WTC11 (cell line): ENCODE measurements at regions of chr10 and their contacts with region 1.

Region 1: GRCh38 chr10:86139066-86139657 is 227.4 kb downstream of the GRID1 start:
- DNase-seq: peak; percentile 72
- ATAC-seq: peak; percentile 86
- H3K4me3 Mint-ChIP-seq: no peak overlapping the region
- H3K27ac Mint-ChIP-seq: no peak overlapping the region
- H3K4me1 Mint-ChIP-seq: peaks cover 11% of the 10 kb centered on the region
- H3K27me3 Mint-ChIP-seq: no peaks in the 10 kb centered on the region
- CTCF ChIP-seq: peak; percentile 80

Region 2: GRCh38 chr10:85995791-85996190 is 143.4 kb before region 1 on chr10:
- CTCF ChIA-PET with region 1: interaction called, 16 read pairs
- POLR2A ChIA-PET with region 1: no interaction called
- DNase-seq: peak; percentile 31
- ATAC-seq: peak; percentile 70
- H3K4me3 Mint-ChIP-seq: no peak overlapping the region
- H3K27ac Mint-ChIP-seq: no peak overlapping the region; the same call in 1 of the 2 replicates
- H3K4me1 Mint-ChIP-seq: no peaks in the 10 kb centered on the region
- H3K27me3 Mint-ChIP-seq: no peaks in the 10 kb centered on the region
- CTCF ChIP-seq: no peak

Region 3: GRCh38 chr10:86035791-86036543 is 103.2 kb before region 1 on chr10:
- CTCF ChIA-PET with region 1: no interaction called
- POLR2A ChIA-PET with region 1: no interaction called
- DNase-seq: no peak
- ATAC-seq: no peak
- H3K4me3 Mint-ChIP-seq: no peak overlapping the region
- H3K27ac Mint-ChIP-seq: no peak overlapping the region
- H3K4me1 Mint-ChIP-seq: 0 out of 2 replicates have a peak, but pooled peaks cover 3% of the 10 kb centered on the region
- H3K27me3 Mint-ChIP-seq: no peaks in the 10 kb centered on the region; the same call in 1 of the 2 replicates
- CTCF ChIP-seq: no peak

Region 4: DNA sequence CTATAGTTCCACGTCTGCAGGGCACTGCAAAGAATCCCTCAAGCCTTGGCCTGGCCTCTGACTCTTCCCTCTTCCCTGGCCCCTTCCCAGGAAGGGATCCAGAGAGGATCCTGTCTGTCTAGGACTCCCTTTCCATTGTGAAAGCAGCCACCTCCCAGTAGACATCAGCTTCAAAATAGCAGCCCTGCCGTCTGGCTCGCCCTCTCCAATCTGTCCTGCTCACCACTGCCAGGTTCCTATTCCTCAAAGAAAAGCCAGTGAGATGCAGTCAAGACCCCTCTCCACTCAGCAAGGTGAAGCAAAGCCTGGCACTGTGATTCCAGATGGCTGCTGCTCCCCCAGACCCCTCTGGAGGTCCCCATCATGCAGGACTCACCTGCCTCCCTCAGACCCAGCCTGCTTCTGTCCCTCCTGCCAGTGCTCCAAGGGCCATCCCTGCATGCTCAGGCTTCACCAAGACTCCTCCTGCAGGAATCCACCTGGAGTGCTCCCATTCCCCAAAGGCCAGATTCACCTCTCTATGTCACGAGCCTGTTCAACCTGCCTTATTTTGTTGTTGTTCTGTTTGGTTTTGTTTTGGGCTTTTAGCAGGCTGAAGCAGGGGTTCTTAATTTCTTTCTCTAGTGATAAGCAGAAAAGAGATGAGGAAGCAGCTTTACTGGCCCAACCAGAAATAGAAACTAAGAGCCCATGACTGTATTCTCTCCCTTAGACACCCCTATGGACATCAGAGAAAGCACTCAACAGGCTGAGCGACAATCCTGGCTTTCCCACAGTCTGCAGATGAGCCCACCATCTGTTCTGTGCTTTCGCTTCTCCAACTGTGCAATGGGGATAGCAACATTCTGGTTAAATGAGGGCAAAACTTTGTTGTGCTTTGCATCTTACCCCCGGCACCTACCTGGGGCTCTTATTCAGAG is 77.6 kb before region 1 on chr10:
- CTCF ChIA-PET with region 1: no interaction called
- POLR2A ChIA-PET with region 1: no interaction called
- DNase-seq: no peak
- ATAC-seq: no peak; the same call in 1 of the 2 replicates
- H3K4me3 Mint-ChIP-seq: no peak overlapping the region
- H3K27ac Mint-ChIP-seq: no peak overlapping the region
- H3K4me1 Mint-ChIP-seq: no peaks in the 10 kb centered on the region
- H3K27me3 Mint-ChIP-seq: no peaks in the 10 kb centered on the region; the same call in none of the 2 replicates
- CTCF ChIP-seq: no peak

Region 5: GRCh38 chr10:86149257-86149656 is 10.1 kb after region 1 on chr10:
- CTCF ChIA-PET with region 1: interaction called, 13 read pairs
- POLR2A ChIA-PET with region 1: no interaction called
- DNase-seq: no peak
- ATAC-seq: peak; percentile 36; the same call in 1 of the 2 replicates
- H3K4me3 Mint-ChIP-seq: no peak overlapping the region
- H3K27ac Mint-ChIP-seq: no peak overlapping the region
- H3K4me1 Mint-ChIP-seq: peaks cover 10% of the 10 kb centered on the region
- H3K27me3 Mint-ChIP-seq: no peaks in the 10 kb centered on the region
- CTCF ChIP-seq: no peak

Region 6: GRCh38 chr10:86155054-86155921 is 16.1 kb after region 1 on chr10:
- CTCF ChIA-PET with region 1: interaction called, 14 read pairs
- POLR2A ChIA-PET with region 1: no interaction called
- DNase-seq: peak; percentile 18
- ATAC-seq: peak; percentile 79
- H3K4me3 Mint-ChIP-seq: no peak overlapping the region
- H3K27ac Mint-ChIP-seq: no peak overlapping the region
- H3K4me1 Mint-ChIP-seq: no peaks in the 10 kb centered on the region
- H3K27me3 Mint-ChIP-seq: peaks cover 2% of the 10 kb centered on the region; the same call in 1 of the 2 replicates
- CTCF ChIP-seq: no peak

Region 7: DNA sequence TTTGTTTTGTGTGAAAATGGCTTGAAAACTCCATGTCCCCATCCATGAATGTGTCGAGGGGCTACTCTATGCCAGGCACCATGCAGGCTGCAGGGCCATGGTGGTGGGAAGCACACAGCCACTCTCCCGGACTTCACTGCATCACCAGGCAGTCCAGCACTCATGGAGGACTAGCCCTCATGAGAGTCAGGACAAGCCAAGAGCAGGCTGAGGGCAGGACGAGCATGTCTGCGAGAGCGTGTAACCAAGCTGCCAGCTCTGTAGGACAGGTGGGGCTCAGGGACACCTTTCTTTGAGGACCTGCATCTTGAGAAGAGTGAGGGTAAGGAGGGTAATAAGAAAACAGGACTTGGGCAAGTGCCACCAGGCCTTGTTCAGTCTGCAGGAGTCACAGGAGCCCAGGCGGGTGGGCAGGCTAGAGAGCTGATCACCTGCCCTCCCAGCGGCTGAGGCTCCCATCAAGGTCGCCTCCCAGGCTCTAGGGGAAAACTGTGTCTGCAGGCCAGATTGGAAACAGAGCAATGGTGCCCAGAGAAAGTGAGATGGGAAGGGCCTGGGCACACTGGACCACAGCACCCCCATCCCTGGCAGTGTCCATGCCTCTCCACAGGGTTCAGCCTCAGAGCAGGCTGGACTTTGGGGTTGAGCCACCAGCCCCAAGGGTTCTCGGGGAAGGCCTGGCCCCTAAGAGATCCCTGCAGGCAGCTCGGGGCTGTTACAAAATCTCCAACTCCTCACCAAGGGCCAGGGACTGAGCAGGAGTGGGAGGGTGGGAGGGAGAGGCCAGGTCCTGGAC is 65.3 kb after region 1 on chr10:
- CTCF ChIA-PET with region 1: no interaction called
- POLR2A ChIA-PET with region 1: no interaction called
- DNase-seq: peak; percentile 3
- ATAC-seq: no peak
- H3K4me3 Mint-ChIP-seq: no peak overlapping the region
- H3K27ac Mint-ChIP-seq: no peak overlapping the region
- H3K4me1 Mint-ChIP-seq: peaks cover 7% of the 10 kb centered on the region
- H3K27me3 Mint-ChIP-seq: no peaks in the 10 kb centered on the region
- CTCF ChIP-seq: no peak

Region 8: GRCh38 chr10:86269332-86269731 is 130.2 kb after region 1 on chr10:
- CTCF ChIA-PET with region 1: no interaction called
- POLR2A ChIA-PET with region 1: no interaction called
- DNase-seq: no peak
- ATAC-seq: no peak
- H3K4me3 Mint-ChIP-seq: no peak overlapping the region
- H3K27ac Mint-ChIP-seq: no peak overlapping the region
- H3K4me1 Mint-ChIP-seq: 0 out of 2 replicates have a peak, but pooled peaks cover under 1% of the 10 kb centered on the region
- H3K27me3 Mint-ChIP-seq: no peaks in the 10 kb centered on the region; the same call in 1 of the 2 replicates
- CTCF ChIP-seq: no peak